Activated naive CD4-positive, alpha-beta T cell treated with anti-CD3 and anti-CD28 coated beads for 36 hours (primary cell): ENCODE measurements at regions of chr5 and their contacts with region 1.

Region 1: GRCh38 chr5:119302916-119303897 is 52.6 kb upstream of the TNFAIP8 start:
- DNase-seq: no peak
- H3K4me3 Mint-ChIP-seq: peak overlapping the region; percentile 13
- H3K27ac Mint-ChIP-seq: peak overlapping the region; percentile 97
- H3K4me1 Mint-ChIP-seq: peaks cover 91% of the 10 kb centered on the region
- H3K27me3 Mint-ChIP-seq: no peaks in the 10 kb centered on the region

Region 2: DNA sequence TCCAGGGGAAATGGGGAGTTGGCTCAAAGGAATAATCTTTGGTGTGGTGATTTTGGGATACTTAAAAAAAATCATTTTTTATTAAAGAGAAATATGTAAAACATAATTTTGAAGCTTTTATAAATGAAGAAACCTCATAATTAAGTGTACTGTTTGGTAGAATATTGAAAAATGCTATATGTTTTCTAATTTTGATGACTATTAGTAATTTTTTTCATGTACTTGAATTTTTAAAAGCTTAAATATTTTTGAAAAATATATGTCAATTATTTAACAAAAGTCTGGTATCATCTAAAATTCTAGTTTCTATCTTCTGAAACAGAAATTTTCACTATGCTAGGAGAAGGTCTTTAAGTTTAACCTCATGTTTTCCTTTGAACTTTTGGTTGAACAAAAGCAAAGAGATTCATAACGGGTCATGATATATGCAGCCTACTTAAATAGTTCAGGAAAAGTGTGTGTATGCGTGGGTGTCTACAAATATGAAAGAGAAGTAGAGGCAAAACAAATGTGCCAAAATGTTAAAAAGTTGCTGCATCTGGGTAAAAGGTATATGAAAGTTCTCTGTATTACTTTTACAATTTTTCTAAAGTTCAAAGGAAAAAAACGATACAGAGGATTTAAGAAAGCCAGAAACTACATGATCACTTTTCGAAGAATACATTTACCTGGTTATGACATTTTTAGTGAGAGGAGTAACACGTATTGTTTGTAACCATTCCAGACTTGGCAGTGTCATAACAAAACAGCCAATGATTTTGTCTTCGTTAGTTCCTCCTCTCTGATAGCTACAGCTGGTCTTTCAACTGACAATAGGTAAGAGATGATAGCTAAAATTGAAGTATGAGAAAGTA is 64.7 kb before region 1 on chr5:
- CTCF ChIA-PET with region 1: no interaction called
- intact Hi-C with region 1: loop called (anchors 2 kb)
- DNase-seq: no peak
- H3K4me3 Mint-ChIP-seq: peak overlapping the region; percentile 43
- H3K27ac Mint-ChIP-seq: peak overlapping the region; percentile 54
- H3K4me1 Mint-ChIP-seq: peaks cover 32% of the 10 kb centered on the region
- H3K27me3 Mint-ChIP-seq: no peaks in the 10 kb centered on the region

Region 3: GRCh38 chr5:119290161-119290569 is 13.0 kb before region 1 on chr5:
- CTCF ChIA-PET with region 1: interaction called, 11 read pairs
- intact Hi-C with region 1: loop called (anchors 1 kb)
- DNase-seq: peak; percentile 44
- H3K4me3 Mint-ChIP-seq: peak overlapping the region; percentile 19
- H3K27ac Mint-ChIP-seq: peak overlapping the region; percentile 90
- H3K4me1 Mint-ChIP-seq: peaks cover 83% of the 10 kb centered on the region
- H3K27me3 Mint-ChIP-seq: no peaks in the 10 kb centered on the region